Lower leg skin (tissue), 4 donors: ENCODE measurements at regions of chr4 and their contacts with region 1.

Region 1: GRCh38 chr4:106473515-106473914 is 104.9 kb upstream of the GIMD1 start:
- DNase-seq: no peak
- H3K4me3 ChIP-seq: no peak overlapping the region
- CTCF ChIP-seq: no peak
- POLR2A ChIP-seq: no peak

Region 2: GRCh38 chr4:106418444-106418843 is 55.1 kb before region 1 on chr4:
- intact Hi-C with region 1: loop called (anchors 5 kb)
- DNase-seq: no peak
- H3K4me3 ChIP-seq: no peak overlapping the region
- CTCF ChIP-seq: no peak
- POLR2A ChIP-seq: no peak